Heart left ventricle (tissue), 16 donors: ENCODE measurements at regions of chr13 and their contacts with region 1.

Region 1: DNA sequence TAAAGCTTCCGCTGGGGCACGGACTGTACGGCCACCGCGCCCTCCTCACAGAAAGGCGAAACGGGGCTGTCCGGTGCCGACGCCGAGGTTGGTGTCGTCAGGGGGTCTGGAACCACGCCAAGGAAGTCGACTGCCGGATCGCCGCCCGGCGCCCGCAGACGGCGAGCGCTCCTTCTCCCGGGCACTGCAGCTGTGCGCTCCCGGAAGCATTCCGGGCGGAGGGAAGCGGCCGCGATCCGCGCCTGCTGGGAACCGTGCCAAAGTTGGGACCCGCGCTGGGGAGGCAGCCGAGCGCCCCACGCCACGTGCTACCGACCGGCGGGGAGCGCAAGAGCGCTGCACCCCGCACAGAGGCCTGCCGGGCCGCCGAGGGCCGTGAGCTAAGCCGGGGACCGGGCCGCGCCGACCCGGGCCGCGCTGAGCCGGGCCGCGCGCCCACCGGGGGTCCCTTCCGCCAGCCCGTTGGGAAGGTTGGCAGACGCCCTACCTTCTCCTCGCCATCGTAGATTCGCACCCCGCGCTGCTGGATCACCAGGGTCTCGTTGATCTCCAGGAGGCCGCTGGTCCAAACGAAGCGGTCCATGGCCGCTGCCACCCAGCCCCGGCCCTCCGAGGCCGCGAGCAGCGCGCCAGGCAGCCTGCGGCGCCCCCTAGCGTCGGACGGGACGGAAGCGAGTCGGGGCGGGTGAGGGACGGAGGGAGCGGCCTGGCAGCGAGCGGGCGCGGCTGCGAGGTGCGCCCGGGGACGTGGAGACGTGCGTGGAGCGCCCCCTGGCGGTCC is at the start of gene VPS36:
- DNase-seq: peak; percentile 95 to 98 (median 96)
- ATAC-seq: peak; percentile 72 to 94 (median 88)
- H3K4me3 ChIP-seq: peak within 1 kb of the TSS; percentile 69 to 92 (median 82)
- H3K27ac ChIP-seq: peak within 1 kb of the TSS; percentile 94 to 100 (median 98)
- H3K4me1 ChIP-seq: peaks cover 0 to 41% (median 22%) of the 10 kb centered on the region in 12 donors
- H3K27me3 ChIP-seq: no peaks in the 10 kb centered on the region
- CTCF ChIP-seq: peak; percentile 99 to 100 (median 100)
- POLR2A ChIP-seq: peak in 1 of 2 donors; percentile 71
- total RNA-seq, gene VPS36: 27.8 to 38.5 (median 32.8) TPM

Region 2: GRCh38 chr13:51518827-51519226 is 931.4 kb before region 1 on chr13:
- intact Hi-C with region 1: no loop called
- DNase-seq: no peak
- ATAC-seq: no peak
- H3K4me3 ChIP-seq: no peak overlapping the region
- H3K27ac ChIP-seq: no peak overlapping the region
- H3K4me1 ChIP-seq: peaks cover 0 to 7% (median 0%) of the 10 kb centered on the region in 12 donors
- H3K27me3 ChIP-seq: no peaks in the 10 kb centered on the region
- CTCF ChIP-seq: no peak
- POLR2A ChIP-seq: no peak

Region 3: DNA sequence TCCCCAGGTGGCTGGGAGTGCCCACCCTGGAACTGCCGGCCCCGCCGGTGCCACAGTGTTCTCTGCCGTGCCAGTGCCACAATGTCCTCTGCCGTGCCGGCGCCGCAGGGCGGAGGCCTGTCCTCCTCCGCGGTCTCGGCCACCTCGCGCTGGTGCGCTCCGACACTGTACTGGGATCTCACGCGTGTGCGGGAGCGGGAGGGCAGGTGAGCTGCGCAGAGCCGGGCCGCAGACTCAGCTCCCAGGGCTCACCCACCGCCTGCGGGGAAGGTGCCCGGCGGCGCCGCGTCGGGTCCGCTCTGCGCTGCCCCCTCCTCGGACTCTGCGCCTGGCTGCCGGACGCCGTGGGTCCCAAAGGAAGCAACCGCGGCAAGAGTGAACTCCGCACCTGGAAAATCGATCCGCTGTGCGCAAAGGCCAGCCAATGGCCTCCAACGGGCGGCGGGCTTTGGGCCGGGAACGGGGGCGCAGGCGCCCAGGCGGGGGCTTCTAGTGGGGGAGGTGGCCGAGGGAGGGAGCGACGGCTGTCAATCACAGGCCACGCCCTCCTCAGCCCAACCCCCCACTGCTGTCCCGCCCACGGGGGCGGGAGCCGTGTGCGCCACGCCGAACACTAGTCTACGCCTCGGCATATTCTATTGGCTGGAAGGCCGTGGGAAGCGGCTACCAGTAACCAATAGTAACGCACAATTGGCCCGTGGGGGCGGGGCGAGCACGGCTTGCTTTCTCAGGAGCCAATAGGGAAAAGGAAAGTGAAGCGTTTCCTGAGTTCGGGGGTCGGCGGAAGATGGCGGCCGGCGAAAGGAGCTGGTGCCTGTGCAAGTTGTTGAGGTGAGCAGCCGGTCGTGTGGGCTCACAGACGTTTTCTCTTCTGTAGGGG is 438.3 kb before region 1 on chr13 and contains the start of gene ALG11:
- intact Hi-C with region 1: loop called in 1 of 10 experiments (anchors 10 kb)
- DNase-seq: peak; percentile 99 to 100 (median 100)
- ATAC-seq: peak; percentile 100
- H3K4me3 ChIP-seq: peak within 1 kb of the TSS; percentile 63 to 98 (median 91)
- H3K27ac ChIP-seq: peak within 1 kb of the TSS; percentile 64 to 90 (median 84)
- H3K4me1 ChIP-seq: peaks cover 0 to 32% (median 21%) of the 10 kb centered on the region in 12 donors
- H3K27me3 ChIP-seq: peaks cover 0 to 9% (median 0%) of the 10 kb centered on the region in 9 donors
- CTCF ChIP-seq: peak in 2 of 12 donors; percentile 5 to 16
- POLR2A ChIP-seq: peak in 1 of 2 donors; percentile 30
- total RNA-seq, gene ALG11: 11.6 to 32.9 (median 21.8) TPM

Region 4: DNA sequence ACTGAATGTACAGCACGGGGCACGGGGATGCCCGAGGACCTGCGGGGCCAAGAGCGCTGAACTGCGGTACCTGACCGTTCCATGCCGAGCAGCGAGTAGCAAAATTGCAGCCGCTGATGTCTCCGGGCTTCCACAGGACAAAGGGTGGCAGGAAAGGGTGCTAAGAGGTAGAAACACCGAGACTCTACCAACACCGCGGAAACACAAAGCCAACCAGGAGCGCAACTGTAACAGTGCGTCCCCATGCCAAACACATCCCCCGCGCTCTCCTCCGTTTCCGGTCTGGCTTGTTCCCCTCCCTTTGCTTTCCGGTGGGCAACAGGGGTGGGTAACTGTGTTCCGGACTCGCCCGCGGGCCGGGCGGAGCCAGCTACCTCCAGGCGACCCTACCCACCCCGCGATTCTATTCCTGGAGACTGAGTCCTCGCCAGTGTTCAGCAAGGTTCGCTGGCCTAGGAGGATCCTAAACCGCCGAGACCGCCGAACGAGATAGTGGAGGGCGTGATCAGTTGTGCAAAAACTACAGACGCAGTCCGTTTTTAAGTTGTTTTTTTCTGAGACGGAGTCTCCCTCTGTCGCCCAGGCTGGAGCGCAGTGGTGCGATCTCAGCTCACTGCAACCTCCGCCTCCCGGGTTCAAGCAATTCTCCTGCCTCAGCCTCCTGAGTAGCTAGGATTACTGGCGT is 255.9 kb before region 1 on chr13:
- intact Hi-C with region 1: loop called in 4 of 10 experiments (anchors 5 to 10 kb)
- DNase-seq: peak; percentile 85 to 92 (median 87)
- ATAC-seq: peak; percentile 91 to 95 (median 94)
- H3K4me3 ChIP-seq: peak overlapping the region; percentile 50 to 98 (median 82)
- H3K27ac ChIP-seq: peak overlapping the region; percentile 63 to 90 (median 84)
- H3K4me1 ChIP-seq: peaks cover 0 to 29% (median 18%) of the 10 kb centered on the region in 12 donors
- H3K27me3 ChIP-seq: no peaks in the 10 kb centered on the region
- CTCF ChIP-seq: peak in 2 of 12 donors; percentile 25 to 32
- POLR2A ChIP-seq: peak in 1 of 2 donors; percentile 46

Region 5: DNA sequence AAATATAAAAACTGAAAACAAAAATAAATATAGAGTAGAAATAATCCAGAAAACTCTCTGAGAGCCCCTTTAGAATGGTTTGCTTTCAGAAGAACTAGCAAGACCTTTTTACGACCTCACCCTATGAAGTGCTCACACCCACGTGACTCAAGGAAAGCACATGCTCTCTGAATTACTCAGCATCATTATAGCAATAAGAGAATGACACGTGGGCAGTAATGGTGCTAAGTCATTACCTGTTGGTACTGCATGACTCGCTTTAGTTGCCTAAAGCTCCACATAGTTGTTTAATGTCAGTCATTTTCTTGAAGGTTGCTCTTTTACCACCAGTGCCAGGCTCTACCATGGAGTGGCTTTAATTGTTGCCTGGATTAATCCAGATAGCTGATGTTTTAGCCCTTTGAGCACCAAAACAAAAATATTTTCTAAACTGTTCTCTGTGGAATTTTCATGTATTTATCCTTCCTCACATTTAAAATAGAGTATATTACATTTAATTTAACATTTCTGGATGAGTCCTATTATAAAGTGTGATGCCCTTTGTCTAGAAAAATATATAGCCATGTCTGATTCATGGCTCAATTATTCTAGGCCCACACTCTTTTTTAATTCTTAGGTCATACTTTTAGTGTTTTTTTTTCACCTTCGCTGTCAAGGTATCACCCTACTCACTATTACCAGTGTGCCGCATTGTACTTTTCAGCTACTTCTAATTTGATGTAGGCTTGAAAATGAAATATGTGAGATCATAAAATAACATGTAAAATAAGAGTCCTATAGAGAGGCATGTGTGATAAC is 101.0 kb before region 1 on chr13:
- intact Hi-C with region 1: loop called in 7 of 10 experiments (anchors 2 to 10 kb)
- DNase-seq: no peak
- ATAC-seq: no peak
- H3K4me3 ChIP-seq: no peak overlapping the region
- H3K27ac ChIP-seq: no peak overlapping the region
- H3K4me1 ChIP-seq: peaks cover 0 to 4% (median 0%) of the 10 kb centered on the region in 12 donors
- H3K27me3 ChIP-seq: no peaks in the 10 kb centered on the region
- CTCF ChIP-seq: no peak
- POLR2A ChIP-seq: no peak

Region 6: GRCh38 chr13:52359534-52359933 is 90.7 kb before region 1 on chr13:
- intact Hi-C with region 1: no loop called
- DNase-seq: no peak
- ATAC-seq: peak in 2 of 4 donors; percentile 67 to 73
- H3K4me3 ChIP-seq: no peak overlapping the region
- H3K27ac ChIP-seq: peak overlapping the region in 1 of 12 donors; percentile 8
- H3K4me1 ChIP-seq: no peaks in the 10 kb centered on the region
- H3K27me3 ChIP-seq: no peaks in the 10 kb centered on the region
- CTCF ChIP-seq: no peak
- POLR2A ChIP-seq: no peak

Region 7: GRCh38 chr13:52405767-52406494 is 44.3 kb before region 1 on chr13 and contains the start of gene THSD1:
- intact Hi-C with region 1: loop called in 8 of 10 experiments (anchors 1 to 5 kb)
- DNase-seq: peak; percentile 84 to 89 (median 86)
- ATAC-seq: peak; percentile 76 to 97 (median 94)
- H3K4me3 ChIP-seq: peak within 1 kb of the TSS; percentile 45 to 88 (median 72)
- H3K27ac ChIP-seq: peak within 1 kb of the TSS; percentile 35 to 91 (median 76)
- H3K4me1 ChIP-seq: peaks cover 0 to 19% (median 11%) of the 10 kb centered on the region in 12 donors
- H3K27me3 ChIP-seq: peaks cover 0 to 13% (median 0%) of the 10 kb centered on the region in 9 donors
- CTCF ChIP-seq: no peak
- POLR2A ChIP-seq: peak in 1 of 2 donors; percentile 59
- total RNA-seq, gene THSD1: 5.4 to 10.1 (median 6.4) TPM

Region 8: GRCh38 chr13:52652196-52652979 is 202.2 kb after region 1 on chr13 and contains the start of gene SUGT1:
- intact Hi-C with region 1: loop called in 4 of 10 experiments (anchors 10 kb)
- DNase-seq: peak; percentile 98 to 99 (median 98)
- ATAC-seq: peak; percentile 99 to 100 (median 99)
- H3K4me3 ChIP-seq: peak within 1 kb of the TSS; percentile 59 to 91 (median 80)
- H3K27ac ChIP-seq: peak within 1 kb of the TSS; percentile 95 to 100 (median 99)
- H3K4me1 ChIP-seq: peaks cover 0 to 47% (median 38%) of the 10 kb centered on the region in 12 donors
- H3K27me3 ChIP-seq: no peaks in the 10 kb centered on the region
- CTCF ChIP-seq: peak; percentile 25 to 87 (median 61)
- POLR2A ChIP-seq: peak in 1 of 2 donors; percentile 61
- total RNA-seq, gene SUGT1: 32.7 to 59.2 (median 47.4) TPM